Sciatic nerve (tissue), 2 donors: ENCODE measurements at regions of chr4 and their contacts with region 1.

Region 1: GRCh38 chr4:34328939-34329338 is 1915.4 kb downstream of the ARAP2 start:
- DNase-seq: no peak
- ATAC-seq: no peak

Region 2: DNA sequence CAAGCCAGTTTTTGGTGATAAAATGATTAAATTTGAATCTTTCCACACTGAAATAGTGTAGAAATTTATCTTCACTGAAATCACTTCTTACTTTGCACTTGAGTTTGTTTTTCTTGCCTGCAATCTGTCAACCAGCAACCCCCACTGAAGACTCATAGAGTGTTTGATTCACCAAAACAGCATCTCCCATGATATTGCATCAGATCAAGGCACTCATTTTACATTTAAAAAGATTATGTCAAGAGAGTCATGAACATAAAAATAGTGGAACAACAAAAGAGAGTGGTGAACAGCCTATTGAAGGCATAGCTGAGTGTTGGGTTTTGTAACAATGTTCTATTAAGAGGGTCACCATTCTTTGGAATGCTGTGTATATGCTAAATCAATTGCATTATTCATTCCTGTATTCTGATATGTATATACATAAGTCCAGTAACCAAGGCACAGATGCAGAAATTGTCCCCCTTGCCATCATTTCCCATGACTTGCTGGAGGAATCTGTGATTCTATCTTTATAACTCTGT is 19.5 kb before region 1 on chr4:
- intact Hi-C with region 1: loop called (anchors 2 kb)
- DNase-seq: no peak
- ATAC-seq: no peak

Region 3: DNA sequence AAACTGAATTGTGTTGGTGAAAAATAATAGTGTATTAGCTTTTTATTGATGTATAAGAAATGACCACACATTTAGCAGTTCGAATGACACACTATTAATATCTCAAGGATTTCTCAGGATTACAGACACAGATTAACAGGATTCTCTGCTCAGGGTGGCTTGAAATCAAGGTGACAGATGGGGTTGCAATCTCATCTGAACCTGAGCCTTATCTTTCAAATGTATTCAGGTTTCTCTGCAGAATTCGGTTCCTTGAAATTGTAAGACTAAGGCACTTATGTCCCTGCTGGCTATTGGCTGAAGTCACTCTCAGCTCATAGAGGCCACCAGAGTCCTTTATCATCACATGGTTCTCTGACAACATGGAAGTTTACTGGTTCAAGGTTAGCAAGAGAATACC is 135.3 kb after region 1 on chr4:
- intact Hi-C with region 1: no loop called
- DNase-seq: no peak
- ATAC-seq: no peak